HCT116 (cell line): ENCODE measurements at regions of chr13 and their contacts with region 1.

Region 1: DNA sequence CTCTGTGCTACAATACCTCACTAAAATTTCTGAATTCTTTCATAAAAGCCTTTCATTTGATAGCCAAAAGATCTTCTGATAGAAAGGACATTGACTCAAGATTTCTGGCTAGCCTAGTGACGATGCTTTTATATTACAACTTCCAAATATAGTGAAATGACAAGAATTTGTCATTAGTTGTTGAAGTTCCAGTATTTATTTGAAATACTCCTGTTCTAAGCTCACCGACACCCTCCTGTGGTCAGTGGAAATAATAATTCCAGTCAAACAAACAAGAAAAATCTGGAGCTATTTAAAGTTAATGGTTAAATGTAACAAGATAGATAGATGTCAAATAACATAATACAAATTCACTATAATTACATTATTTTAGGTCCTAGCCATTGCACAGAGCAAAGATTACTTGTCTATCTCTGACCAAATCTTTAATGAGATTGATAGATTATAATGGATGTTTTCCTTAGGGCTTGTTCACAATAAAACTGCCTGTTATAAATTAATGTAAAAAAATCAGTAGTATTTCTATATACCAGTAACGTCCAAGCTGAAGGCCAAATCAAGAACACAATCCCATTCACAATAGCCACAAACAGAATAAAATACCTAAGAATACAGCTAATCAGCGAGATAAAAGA is 195.5 kb downstream of the RGCC start:
- DNase-seq: peak; percentile 23
- ATAC-seq: no peak
- H3K4me3 ChIP-seq: no peak overlapping the region
- H3K27ac ChIP-seq: no peak overlapping the region
- H3K4me1 ChIP-seq: peaks cover 26 to 30% of the 10 kb centered on the region in 2 experiments
- H3K27me3 ChIP-seq: no peaks in the 10 kb centered on the region
- CTCF ChIP-seq: peak; percentile 27 to 71 (median 66); a peak in 4 of 6 replicates
- POLR2A ChIP-seq: no peak
- RAD21 ChIP-seq: peak; percentile 78

Region 2: DNA sequence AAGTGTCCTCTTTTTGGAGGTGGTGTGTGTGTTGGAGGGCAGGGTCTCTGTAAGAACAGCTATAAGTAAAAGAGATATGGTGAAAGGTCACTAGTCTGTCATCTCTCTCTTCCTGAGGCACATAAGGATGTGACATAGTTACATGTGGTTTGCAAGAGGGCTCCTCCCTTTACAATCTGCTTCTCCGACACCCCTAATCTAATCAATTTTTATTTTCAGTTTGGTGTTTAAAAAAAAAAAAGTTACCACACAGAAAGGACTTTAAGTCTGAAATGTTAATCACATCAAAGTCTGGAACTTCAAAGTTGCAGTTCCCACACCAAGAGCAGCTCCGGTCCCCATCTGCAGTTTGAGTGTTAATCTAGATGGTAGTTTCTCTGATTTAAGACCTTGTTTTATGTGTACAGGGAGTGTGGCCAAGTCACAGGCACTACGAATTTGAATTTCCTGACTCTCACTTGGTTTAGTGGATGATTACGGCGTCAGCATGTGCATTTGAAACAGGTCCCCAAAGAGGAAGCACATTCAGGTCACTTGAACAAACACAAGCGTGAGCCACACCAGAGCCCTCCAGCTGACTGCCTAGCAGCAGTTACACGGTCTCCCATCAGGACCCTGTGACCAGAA is 1039.5 kb before region 1 on chr13:
- CTCF ChIA-PET with region 1: no interaction called
- POLR2A ChIA-PET with region 1: no interaction called
- RAD21 ChIA-PET with region 1: no interaction called
- intact Hi-C with region 1: no loop called
- DNase-seq: no peak
- ATAC-seq: no peak
- H3K4me3 ChIP-seq: no peak overlapping the region
- H3K27ac ChIP-seq: no peak overlapping the region
- H3K4me1 ChIP-seq: no peaks in the 10 kb centered on the region
- H3K27me3 ChIP-seq: no peaks in the 10 kb centered on the region
- CTCF ChIP-seq: no peak
- POLR2A ChIP-seq: no peak
- RAD21 ChIP-seq: no peak

Region 3: GRCh38 chr13:41054212-41054877 is 598.5 kb before region 1 on chr13:
- CTCF ChIA-PET with region 1: interaction called, 11 read pairs
- POLR2A ChIA-PET with region 1: no interaction called
- RAD21 ChIA-PET with region 1: no interaction called
- intact Hi-C with region 1: no loop called
- DNase-seq: no peak
- ATAC-seq: peak; percentile 63; the same call in 1 of the 2 replicates
- H3K4me3 ChIP-seq: no peak overlapping the region
- H3K27ac ChIP-seq: no peak overlapping the region; the same call in 1 of the 2 replicates
- H3K4me1 ChIP-seq: peaks cover 30 to 53% of the 10 kb centered on the region in 2 experiments
- H3K27me3 ChIP-seq: no peaks in the 10 kb centered on the region
- CTCF ChIP-seq: peak in 2 of 3 experiments; percentile 42 to 71; a peak in 3 of 6 replicates
- POLR2A ChIP-seq: no peak
- RAD21 ChIP-seq: no peak

Region 4: GRCh38 chr13:41061075-41061913 is 591.5 kb before region 1 on chr13 and contains the start of gene WBP4:
- CTCF ChIA-PET with region 1: no interaction called
- POLR2A ChIA-PET with region 1: no interaction called
- RAD21 ChIA-PET with region 1: no interaction called
- intact Hi-C with region 1: loop called (anchors 5 kb)
- DNase-seq: peak; percentile 94
- ATAC-seq: peak; percentile 76
- H3K4me3 ChIP-seq: peak within 1 kb of the TSS; percentile 69 to 70
- H3K27ac ChIP-seq: peak within 1 kb of the TSS; percentile 94
- H3K4me1 ChIP-seq: peaks cover 49 to 67% of the 10 kb centered on the region in 2 experiments
- H3K27me3 ChIP-seq: no peaks in the 10 kb centered on the region
- CTCF ChIP-seq: no peak
- POLR2A ChIP-seq: peak; percentile 69
- RAD21 ChIP-seq: no peak
- total RNA-seq, gene WBP4: 14.5 TPM

Region 5: GRCh38 chr13:41075034-41075433 is 577.8 kb before region 1 on chr13:
- CTCF ChIA-PET with region 1: interaction called, 3 read pairs
- POLR2A ChIA-PET with region 1: no interaction called
- RAD21 ChIA-PET with region 1: no interaction called
- intact Hi-C with region 1: loop called (anchors 5 kb)
- DNase-seq: no peak
- ATAC-seq: peak; percentile 52
- H3K4me3 ChIP-seq: no peak overlapping the region
- H3K27ac ChIP-seq: no peak overlapping the region
- H3K4me1 ChIP-seq: no peaks in the 10 kb centered on the region
- H3K27me3 ChIP-seq: no peaks in the 10 kb centered on the region
- CTCF ChIP-seq: peak; percentile 49 to 60 (median 49); a peak in 5 of 6 replicates
- POLR2A ChIP-seq: no peak
- RAD21 ChIP-seq: peak; percentile 70

Region 6: GRCh38 chr13:41352935-41353840 is 299.7 kb before region 1 on chr13:
- CTCF ChIA-PET with region 1: interaction called, 3 read pairs
- POLR2A ChIA-PET with region 1: no interaction called
- RAD21 ChIA-PET with region 1: no interaction called
- intact Hi-C with region 1: loop called (anchors 10 kb)
- DNase-seq: peak; percentile 62
- ATAC-seq: peak; percentile 96
- H3K4me3 ChIP-seq: no peak overlapping the region
- H3K27ac ChIP-seq: no peak overlapping the region; the same call in 1 of the 2 replicates
- H3K4me1 ChIP-seq: peaks cover 10 to 21% of the 10 kb centered on the region in 2 experiments
- H3K27me3 ChIP-seq: no peaks in the 10 kb centered on the region
- CTCF ChIP-seq: peak; percentile 48 to 86 (median 75); a peak in 5 of 6 replicates
- POLR2A ChIP-seq: no peak
- RAD21 ChIP-seq: peak; percentile 44

Region 7: DNA sequence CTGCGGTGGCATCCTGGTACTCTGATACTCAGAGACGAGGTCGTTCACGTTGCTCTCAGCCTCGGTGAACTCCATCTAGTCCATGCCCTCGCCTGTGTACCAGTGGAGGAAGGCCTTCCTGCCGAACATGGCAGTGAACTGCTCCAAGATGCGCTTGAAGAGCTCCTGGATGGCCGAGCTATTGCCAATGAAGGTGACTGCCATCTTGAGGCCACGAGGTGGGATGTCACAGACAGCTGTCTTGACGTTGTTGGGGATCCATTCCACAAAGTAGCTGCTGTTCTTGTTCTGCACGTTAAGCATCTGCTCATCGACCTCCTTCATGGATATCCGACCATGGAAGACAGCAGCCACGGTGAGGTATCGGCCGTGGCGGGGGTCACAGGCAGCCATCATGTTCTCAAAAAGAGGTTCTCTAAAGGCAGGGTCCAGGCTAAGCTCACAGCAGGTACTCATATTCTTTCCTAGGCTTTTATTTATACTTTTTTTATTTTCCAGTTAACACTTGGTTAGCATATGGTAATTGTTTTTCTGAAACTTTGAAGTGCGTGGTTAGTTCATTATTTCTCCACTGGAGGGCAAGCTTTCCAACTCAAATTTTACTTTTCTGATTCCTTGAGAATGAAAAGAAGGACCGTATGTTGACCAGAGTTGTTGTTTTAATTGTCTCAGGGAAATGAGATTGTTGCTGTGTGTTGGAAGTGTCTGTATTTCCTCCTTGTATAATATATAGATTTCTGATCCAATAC is 267.9 kb before region 1 on chr13:
- CTCF ChIA-PET with region 1: interaction called, 17 read pairs
- POLR2A ChIA-PET with region 1: no interaction called
- RAD21 ChIA-PET with region 1: no interaction called
- intact Hi-C with region 1: loop called (anchors 1 kb)
- DNase-seq: no peak
- ATAC-seq: peak; percentile 52
- H3K4me3 ChIP-seq: no peak overlapping the region
- H3K27ac ChIP-seq: no peak overlapping the region
- H3K4me1 ChIP-seq: no peaks in the 10 kb centered on the region
- H3K27me3 ChIP-seq: no peaks in the 10 kb centered on the region
- CTCF ChIP-seq: peak; percentile 28 to 58 (median 40); a peak in 4 of 6 replicates
- POLR2A ChIP-seq: no peak
- RAD21 ChIP-seq: peak; percentile 50

Region 8: DNA sequence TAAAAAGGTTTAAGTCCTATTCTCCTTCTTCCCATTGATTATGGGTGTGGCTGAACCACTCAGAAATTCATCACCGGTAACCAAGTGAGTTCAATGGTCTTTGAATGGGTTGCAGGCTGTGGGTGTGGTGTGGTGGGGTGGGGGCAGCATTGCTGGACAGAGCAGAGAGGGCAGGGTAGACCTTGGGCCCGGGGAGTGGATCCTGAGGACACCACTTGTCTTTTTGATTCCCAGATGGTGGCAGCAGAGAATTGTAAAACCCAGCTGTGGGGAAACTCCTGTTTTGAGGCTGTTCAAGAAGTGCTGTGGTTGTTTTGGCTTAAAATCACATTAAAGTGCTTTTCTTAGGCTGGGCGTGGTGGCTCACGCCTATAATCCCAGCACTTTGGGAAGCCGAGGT is 241.3 kb before region 1 on chr13:
- CTCF ChIA-PET with region 1: interaction called, 30 read pairs
- POLR2A ChIA-PET with region 1: no interaction called
- RAD21 ChIA-PET with region 1: interaction called, 3 to 7 read pairs
- intact Hi-C with region 1: loop called (anchors 1 kb)
- DNase-seq: peak; percentile 23
- ATAC-seq: peak; percentile 89
- H3K4me3 ChIP-seq: no peak overlapping the region
- H3K27ac ChIP-seq: no peak overlapping the region
- H3K4me1 ChIP-seq: 0 out of 4 replicates have a peak, but pooled peaks cover 0 to 4% of the 10 kb centered on the region in 2 experiments
- H3K27me3 ChIP-seq: no peaks in the 10 kb centered on the region
- CTCF ChIP-seq: peak; percentile 24 to 36 (median 32); a peak in 3 of 6 replicates
- POLR2A ChIP-seq: no peak
- RAD21 ChIP-seq: peak; percentile 70

Region 9: DNA sequence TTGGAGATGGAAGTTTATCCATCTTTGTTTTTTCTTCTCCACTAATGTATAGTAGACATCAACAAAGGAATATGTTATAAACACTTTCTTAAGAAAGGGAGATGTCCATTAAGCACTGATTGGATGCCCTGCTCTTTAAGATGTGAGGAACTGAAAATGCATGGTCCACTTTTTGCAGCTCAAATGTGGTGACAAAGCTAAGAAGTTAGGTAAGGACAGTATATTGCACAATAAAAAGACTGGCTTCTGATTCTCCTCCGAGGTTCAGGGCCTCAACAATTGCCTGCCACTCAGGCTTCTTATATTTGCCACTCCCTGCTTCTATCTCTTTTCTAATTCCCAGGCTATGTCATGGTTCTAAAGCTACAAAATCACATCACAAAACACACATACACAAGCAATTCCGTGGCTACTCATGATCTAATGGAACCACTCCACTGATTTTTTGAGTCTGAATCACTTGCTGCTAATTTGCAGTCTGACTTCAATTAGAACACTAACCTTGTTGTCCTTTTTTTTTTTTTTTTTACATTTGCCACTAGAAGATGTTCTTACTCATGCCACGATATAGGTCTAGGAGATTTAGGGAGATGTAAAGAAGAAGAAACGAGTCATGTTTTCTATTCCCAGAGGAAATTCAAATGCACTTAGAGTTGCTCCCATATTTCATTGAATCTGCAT is 891.5 kb after region 1 on chr13:
- CTCF ChIA-PET with region 1: no interaction called
- POLR2A ChIA-PET with region 1: no interaction called
- RAD21 ChIA-PET with region 1: no interaction called
- intact Hi-C with region 1: no loop called
- DNase-seq: no peak
- ATAC-seq: no peak
- H3K4me3 ChIP-seq: no peak overlapping the region
- H3K27ac ChIP-seq: no peak overlapping the region
- H3K4me1 ChIP-seq: no peaks in the 10 kb centered on the region
- H3K27me3 ChIP-seq: peaks cover 31% of the 10 kb centered on the region
- CTCF ChIP-seq: no peak
- POLR2A ChIP-seq: no peak
- RAD21 ChIP-seq: no peak